ENCODE measurements at regions of chr21 and their contacts with region 1.

Region 1: DNA sequence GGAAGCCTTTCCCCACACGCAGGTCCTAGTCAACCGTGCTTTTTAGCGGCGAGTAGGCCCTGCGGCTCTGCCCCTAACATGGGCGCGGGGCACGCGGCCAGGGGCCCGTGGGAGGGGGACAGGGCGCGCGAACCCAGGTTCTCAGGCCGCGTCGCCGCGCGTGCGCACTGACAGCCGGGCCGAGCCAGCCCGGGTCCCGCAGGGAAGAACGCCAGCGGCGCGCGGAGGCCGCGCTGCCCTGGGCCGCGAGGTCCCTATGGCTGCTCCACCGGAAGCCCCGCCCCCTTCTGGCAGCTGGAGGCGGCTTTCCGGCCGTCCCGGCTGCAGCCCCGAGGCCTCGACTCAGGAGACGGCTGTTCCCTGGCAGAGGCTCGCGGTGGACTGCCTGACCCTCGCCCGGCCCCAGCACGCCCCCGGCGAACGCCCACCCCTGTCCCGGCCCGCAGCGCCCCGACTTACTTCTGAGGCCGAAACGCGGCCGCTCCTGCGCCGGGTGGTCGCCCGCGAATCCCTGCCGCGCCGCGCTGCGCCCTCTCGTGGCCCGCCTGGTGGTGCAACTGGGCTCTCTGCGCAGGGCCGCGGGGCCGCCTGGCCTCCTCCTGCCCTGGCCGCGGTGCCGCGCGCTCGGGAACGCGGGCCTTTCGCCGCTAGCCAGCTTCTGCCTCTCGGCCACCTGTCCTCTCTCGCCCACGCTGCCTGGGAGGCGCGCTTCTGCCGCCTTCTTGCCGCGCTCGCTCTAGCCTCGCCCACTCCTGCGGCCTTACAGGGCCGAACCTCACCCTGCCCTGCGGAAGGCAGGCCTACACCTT is 16.6 kb upstream of the RIPPLY3 start:
- DNase-seq: peak; percentile 97
- CTCF ChIP-seq: peak; percentile 88

Region 2: GRCh38 chr21:36966066-36966820 is 23.7 kb before region 1 on chr21 and contains the start of gene HLCS:
- CTCF ChIA-PET with region 1: interaction called, 42 read pairs
- POLR2A ChIA-PET with region 1: interaction called, 5 read pairs
- DNase-seq: peak; percentile 87
- CTCF ChIP-seq: peak; percentile 40

Region 3: GRCh38 chr21:36976882-36977651 is 12.8 kb before region 1 on chr21:
- CTCF ChIA-PET with region 1: interaction called, 74 read pairs
- POLR2A ChIA-PET with region 1: interaction called, 3 read pairs
- DNase-seq: peak; percentile 59
- CTCF ChIP-seq: peak; percentile 75

Region 4: DNA sequence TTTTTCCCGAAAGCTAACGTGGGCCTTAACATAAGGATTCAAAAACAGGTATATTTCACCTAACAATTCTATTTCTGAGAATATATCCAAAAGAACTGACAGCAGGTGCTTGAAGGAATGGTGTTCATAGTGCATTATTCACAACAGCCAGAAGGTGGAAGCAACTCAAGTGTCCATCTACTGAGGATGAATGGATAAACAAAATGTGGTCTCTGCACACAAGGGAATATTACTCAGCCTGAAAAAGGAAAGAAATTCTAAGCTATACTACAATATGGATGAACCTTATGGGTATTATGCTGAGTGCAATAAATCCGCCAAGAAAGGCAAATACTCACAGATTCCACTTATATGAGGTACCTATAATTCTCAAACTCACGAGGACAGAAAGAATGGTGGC is 10.5 kb after region 1 on chr21:
- CTCF ChIA-PET with region 1: interaction called, 13 read pairs
- POLR2A ChIA-PET with region 1: no interaction called
- DNase-seq: no peak
- CTCF ChIP-seq: no peak

Region 5: DNA sequence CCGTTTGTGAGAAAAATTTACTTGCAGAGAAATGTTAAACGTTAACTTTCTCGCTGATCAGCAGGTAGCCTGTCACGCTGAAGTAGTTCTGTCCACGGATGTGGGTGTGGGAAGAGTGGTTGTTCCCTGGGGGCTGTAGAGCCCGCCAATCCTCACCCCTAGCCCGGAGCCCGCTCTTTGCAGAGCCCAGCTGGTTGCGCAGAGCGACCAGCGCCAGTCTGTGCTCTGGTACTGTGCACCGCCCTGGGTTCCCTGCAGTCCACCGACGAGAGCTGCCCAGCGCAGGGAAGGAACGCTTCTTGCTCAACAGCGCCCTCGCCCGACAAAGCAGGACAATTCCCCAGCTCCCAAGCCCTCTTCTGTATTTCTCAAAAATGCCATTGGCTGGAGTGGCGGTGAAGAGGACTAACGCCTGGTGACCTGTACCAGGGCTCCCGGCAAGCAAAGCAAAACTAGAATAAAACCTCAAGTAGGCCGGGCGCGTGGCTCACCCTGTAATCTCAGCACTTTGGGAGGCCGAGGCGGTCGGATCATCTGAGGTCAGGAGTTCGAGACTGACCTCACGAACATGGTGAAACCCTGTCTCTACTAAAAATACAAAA is 19.9 kb after region 1 on chr21:
- CTCF ChIA-PET with region 1: interaction called, 26 read pairs
- POLR2A ChIA-PET with region 1: no interaction called
- DNase-seq: peak; percentile 89
- CTCF ChIP-seq: peak; percentile 93